Uterus (tissue), 4 donors: ENCODE measurements at regions of chr2 and their contacts with region 1.

Region 1: DNA sequence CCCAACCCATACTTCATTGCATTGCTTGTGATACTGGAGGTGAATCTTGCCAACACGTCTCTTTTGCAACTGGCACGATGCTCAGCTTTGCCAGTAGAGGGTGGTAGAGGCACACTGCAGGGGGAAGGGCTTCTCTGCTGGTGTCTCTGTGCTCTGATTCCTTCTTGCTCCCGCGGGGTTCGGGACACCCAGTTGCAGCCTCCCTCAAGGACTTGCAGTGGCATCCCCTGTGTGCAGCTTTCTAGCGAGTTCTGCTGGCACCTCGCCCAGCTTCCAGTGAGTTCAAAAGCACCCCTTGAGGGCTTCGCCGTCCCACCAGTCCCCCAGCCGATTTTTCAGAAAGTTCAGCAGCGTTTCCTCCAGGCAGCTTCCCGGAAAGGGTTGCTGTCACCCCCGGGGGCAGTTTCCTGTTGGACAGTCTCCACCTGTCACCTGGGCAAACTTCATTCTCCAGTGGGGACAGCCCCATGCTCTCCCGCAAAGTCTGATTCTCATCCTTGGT is 35.3 kb upstream of the EN1 start:
- DNase-seq: peak; percentile 15 to 23
- H3K4me3 ChIP-seq: no peak overlapping the region
- H3K27ac ChIP-seq: no peak overlapping the region
- H3K4me1 ChIP-seq: no peaks in the 10 kb centered on the region
- H3K27me3 ChIP-seq: no peaks in the 10 kb centered on the region
- CTCF ChIP-seq: peak; percentile 34 to 54 (median 40)
- POLR2A ChIP-seq: no peak

Region 2: GRCh38 chr2:118940486-118941205 is 57.9 kb after region 1 on chr2:
- intact Hi-C with region 1: no loop called
- DNase-seq: no peak
- H3K4me3 ChIP-seq: no peak overlapping the region
- H3K27ac ChIP-seq: no peak overlapping the region
- H3K4me1 ChIP-seq: no peaks in the 10 kb centered on the region
- H3K27me3 ChIP-seq: no peaks in the 10 kb centered on the region
- CTCF ChIP-seq: no peak
- POLR2A ChIP-seq: no peak

Region 3: DNA sequence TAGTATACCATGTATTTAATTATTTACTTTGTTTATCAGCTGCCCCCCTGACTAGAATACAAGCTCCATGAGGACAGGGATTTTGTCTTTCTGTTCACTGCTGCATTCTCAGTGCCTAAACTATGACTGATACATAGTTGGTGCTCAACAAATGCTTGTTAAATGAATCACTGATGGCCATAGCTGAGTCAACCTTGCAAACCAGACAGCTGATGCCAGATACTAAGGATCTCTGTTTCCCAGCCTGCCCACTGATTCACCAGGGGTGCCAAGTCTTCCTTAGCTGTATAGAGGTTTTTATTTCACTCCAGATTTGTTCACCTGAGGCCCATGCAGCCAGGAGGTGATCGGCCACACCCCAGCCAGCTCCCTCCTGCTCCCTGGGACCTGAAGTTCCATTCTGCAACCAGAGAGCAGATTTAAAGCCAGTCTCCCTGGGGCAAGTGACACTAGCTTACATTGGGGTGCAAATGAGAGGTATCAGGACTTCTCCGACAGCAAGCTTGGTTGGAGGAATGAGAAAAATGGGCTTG is 183.6 kb after region 1 on chr2:
- intact Hi-C with region 1: no loop called
- DNase-seq: no peak
- H3K4me3 ChIP-seq: no peak overlapping the region
- H3K27ac ChIP-seq: no peak overlapping the region
- H3K4me1 ChIP-seq: no peaks in the 10 kb centered on the region
- H3K27me3 ChIP-seq: no peaks in the 10 kb centered on the region
- CTCF ChIP-seq: no peak
- POLR2A ChIP-seq: no peak

Region 4: GRCh38 chr2:119290859-119291587 is 408.3 kb after region 1 on chr2:
- intact Hi-C with region 1: loop called (anchors 10 kb)
- DNase-seq: peak; percentile 49 to 79
- H3K4me3 ChIP-seq: no peak overlapping the region
- H3K27ac ChIP-seq: no peak overlapping the region
- H3K4me1 ChIP-seq: no peaks in the 10 kb centered on the region
- H3K27me3 ChIP-seq: no peaks in the 10 kb centered on the region
- CTCF ChIP-seq: peak; percentile 52 to 60 (median 57)
- POLR2A ChIP-seq: no peak